ENCODE measurements at regions of chr14 and their contacts with region 1.

Region 1: DNA sequence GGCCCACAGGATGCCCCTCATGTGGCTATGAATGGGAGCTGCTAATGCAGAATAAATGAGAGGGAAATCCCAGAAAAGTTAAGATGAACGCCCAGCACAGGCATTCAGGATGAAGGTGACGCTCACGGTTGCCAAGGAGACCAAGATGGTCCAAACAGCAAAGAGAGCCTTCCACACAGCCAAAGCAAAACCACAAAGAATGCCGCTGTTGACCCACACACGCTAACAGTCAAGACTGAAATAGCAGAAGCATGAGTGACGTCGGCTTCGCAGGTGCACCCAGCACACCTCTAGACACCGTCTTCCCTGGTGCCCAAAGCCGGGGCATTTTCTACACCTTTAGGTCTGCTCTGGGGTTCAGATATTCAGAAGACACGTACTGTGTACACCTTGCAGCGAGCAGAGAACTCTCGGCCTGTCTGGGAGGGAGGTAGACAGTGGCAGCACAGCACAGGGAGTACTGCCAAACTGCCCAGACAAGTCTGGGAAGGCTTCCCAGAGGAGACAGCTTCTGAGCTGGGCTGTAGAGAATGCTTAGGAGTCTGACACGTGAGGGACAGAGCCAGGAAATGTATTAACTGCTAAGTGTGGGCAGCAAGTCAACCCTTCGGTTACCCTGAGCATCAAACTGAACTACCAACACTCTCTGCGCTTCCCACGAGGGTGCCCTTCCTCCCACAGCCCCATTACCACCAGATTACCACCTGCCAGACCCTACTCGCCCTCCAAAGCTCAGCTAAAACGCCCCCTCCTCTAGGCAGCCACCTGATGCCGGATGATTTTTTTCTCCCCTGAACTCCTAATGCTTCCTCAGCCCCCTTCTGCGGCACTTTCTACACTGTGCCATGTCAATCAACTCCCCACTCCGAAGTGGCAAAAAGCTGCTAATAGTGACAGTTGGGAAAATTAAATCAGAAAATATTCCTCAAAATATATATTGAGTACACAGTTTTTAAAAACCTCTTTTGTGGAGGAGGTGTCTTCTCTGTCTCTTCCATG is 50.1 kb downstream of the CCDC88C start:
- DNase-seq: peak; percentile 97
- ATAC-seq: peak; percentile 77
- H3K4me3 ChIP-seq: peak overlapping the region in 1 of 5 experiments; percentile 13
- H3K4me3 Mint-ChIP-seq: peak overlapping the region; percentile 84
- H3K27ac ChIP-seq: peak overlapping the region; percentile 88 to 98
- H3K27ac Mint-ChIP-seq: peak overlapping the region; percentile 98
- H3K4me1 ChIP-seq: peaks cover 78 to 94% of the 10 kb centered on the region in 2 donors
- H3K4me1 Mint-ChIP-seq: peaks cover 89% of the 10 kb centered on the region
- H3K27me3 ChIP-seq: no peaks in the 10 kb centered on the region
- H3K27me3 Mint-ChIP-seq: no peaks in the 10 kb centered on the region
- CTCF ChIP-seq: no peak

Region 2: GRCh38 chr14:91350813-91351511 is 16.5 kb before region 1 on chr14:
- CTCF ChIA-PET with region 1: interaction called, 24 read pairs
- POLR2A ChIA-PET with region 1: interaction called, 5 read pairs
- intact Hi-C with region 1: loop called (anchors 1 kb)
- DNase-seq: peak; percentile 71
- ATAC-seq: peak; percentile 61
- H3K4me3 ChIP-seq: peak overlapping the region in 4 of 5 experiments; percentile 0 to 49 (median 25)
- H3K4me3 Mint-ChIP-seq: peak overlapping the region; percentile 92
- H3K27ac ChIP-seq: peak overlapping the region; percentile 25 to 61
- H3K27ac Mint-ChIP-seq: peak overlapping the region; percentile 93
- H3K4me1 ChIP-seq: peaks cover 61 to 74% of the 10 kb centered on the region in 2 donors
- H3K4me1 Mint-ChIP-seq: peaks cover 82% of the 10 kb centered on the region
- H3K27me3 ChIP-seq: no peaks in the 10 kb centered on the region
- H3K27me3 Mint-ChIP-seq: no peaks in the 10 kb centered on the region
- CTCF ChIP-seq: no peak

Region 3: DNA sequence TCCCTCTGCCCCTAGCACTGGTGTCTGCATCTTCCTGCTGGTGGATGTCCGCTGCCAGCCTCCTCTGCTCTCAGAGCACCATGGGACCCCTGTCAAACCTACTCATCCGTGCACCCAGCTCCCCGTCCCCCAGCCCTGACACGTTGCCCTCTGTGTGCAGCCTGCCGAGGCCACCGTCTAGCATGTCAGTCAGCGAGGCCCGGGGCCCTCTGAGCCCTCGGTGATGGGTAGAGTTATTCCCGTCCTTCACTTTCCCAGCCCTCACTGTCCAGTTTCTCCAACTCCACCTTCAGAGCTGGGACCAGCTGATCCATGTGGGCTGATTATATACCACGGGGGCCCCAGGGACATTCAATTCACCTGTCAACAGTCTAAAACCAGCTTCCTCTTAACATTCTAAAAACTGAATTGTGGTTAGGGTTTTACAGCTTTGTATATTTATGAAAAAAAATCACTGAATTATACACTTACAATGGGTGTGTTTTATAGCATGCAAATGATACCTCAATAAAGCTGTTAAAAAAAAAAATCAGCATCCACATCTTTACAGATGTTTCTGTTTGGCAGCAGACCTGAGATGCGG is 11.2 kb before region 1 on chr14:
- CTCF ChIA-PET with region 1: interaction called, 24 read pairs
- POLR2A ChIA-PET with region 1: interaction called, 5 read pairs
- intact Hi-C with region 1: loop called (anchors 1 kb)
- DNase-seq: peak; percentile 55
- ATAC-seq: peak; percentile 65
- H3K4me3 ChIP-seq: peak overlapping the region in 4 of 5 experiments; percentile 1 to 47 (median 31)
- H3K4me3 Mint-ChIP-seq: peak overlapping the region; percentile 85
- H3K27ac ChIP-seq: peak overlapping the region in 1 of 2 donors; percentile 55
- H3K27ac Mint-ChIP-seq: peak overlapping the region; percentile 61
- H3K4me1 ChIP-seq: peaks cover 39 to 57% of the 10 kb centered on the region in 2 donors
- H3K4me1 Mint-ChIP-seq: peaks cover 77% of the 10 kb centered on the region
- H3K27me3 ChIP-seq: no peaks in the 10 kb centered on the region
- H3K27me3 Mint-ChIP-seq: no peaks in the 10 kb centered on the region
- CTCF ChIP-seq: no peak

Region 4: GRCh38 chr14:91380610-91381371 is 13.3 kb after region 1 on chr14:
- CTCF ChIA-PET with region 1: no interaction called
- POLR2A ChIA-PET with region 1: no interaction called
- intact Hi-C with region 1: loop called (anchors 2 kb)
- DNase-seq: no peak
- ATAC-seq: peak; percentile 34
- H3K4me3 ChIP-seq: no peak overlapping the region
- H3K4me3 Mint-ChIP-seq: peak overlapping the region; percentile 44
- H3K27ac ChIP-seq: peak overlapping the region in 1 of 2 donors; percentile 58
- H3K27ac Mint-ChIP-seq: peak overlapping the region; percentile 70
- H3K4me1 ChIP-seq: peaks cover 61 to 88% of the 10 kb centered on the region in 2 donors
- H3K4me1 Mint-ChIP-seq: peaks cover 91% of the 10 kb centered on the region
- H3K27me3 ChIP-seq: no peaks in the 10 kb centered on the region
- H3K27me3 Mint-ChIP-seq: no peaks in the 10 kb centered on the region
- CTCF ChIP-seq: no peak

Measured in B cell (primary cell).